Transverse colon (tissue), 4 donors: ENCODE measurements at regions of chr6 and their contacts with region 1.

Region 1: GRCh38 chr6:139375232-139376016 is 976 bp upstream of the CITED2 start:
- DNase-seq: peak; percentile 95
- H3K4me3 ChIP-seq: peak overlapping the region; percentile 80 to 87 (median 86)
- H3K27ac ChIP-seq: peak overlapping the region; percentile 92 to 99 (median 96)
- H3K4me1 ChIP-seq: peaks cover 0 to 28% (median 22%) of the 10 kb centered on the region in 4 donors
- H3K27me3 ChIP-seq: no peaks in the 10 kb centered on the region
- CTCF ChIP-seq: peak in 1 of 5 experiments; percentile 4
- EP300 ChIP-seq: peak; percentile 43
- POLR2A ChIP-seq: peak; percentile 76

Region 2: GRCh38 chr6:139230391-139230840 is 145.0 kb before region 1 on chr6:
- in situ Hi-C with region 1: loop called in 1 of 4 experiments (anchors 25 kb)
- intact Hi-C with region 1: no loop called
- DNase-seq: no peak
- H3K4me3 ChIP-seq: no peak overlapping the region
- H3K27ac ChIP-seq: no peak overlapping the region
- H3K4me1 ChIP-seq: no peaks in the 10 kb centered on the region
- H3K27me3 ChIP-seq: no peaks in the 10 kb centered on the region
- CTCF ChIP-seq: no peak
- EP300 ChIP-seq: no peak
- POLR2A ChIP-seq: no peak

Region 3: GRCh38 chr6:139539852-139540251 is 164.4 kb after region 1 on chr6:
- in situ Hi-C with region 1: loop called in 1 of 4 experiments (anchors 10 kb)
- intact Hi-C with region 1: no loop called
- DNase-seq: peak; percentile 42
- H3K4me3 ChIP-seq: peak overlapping the region in 1 of 4 donors; percentile 2
- H3K27ac ChIP-seq: peak overlapping the region; percentile 57 to 69 (median 62)
- H3K4me1 ChIP-seq: peaks cover 8 to 50% (median 23%) of the 10 kb centered on the region in 4 donors
- H3K27me3 ChIP-seq: no peaks in the 10 kb centered on the region
- CTCF ChIP-seq: no peak
- EP300 ChIP-seq: no peak
- POLR2A ChIP-seq: no peak

Region 4: DNA sequence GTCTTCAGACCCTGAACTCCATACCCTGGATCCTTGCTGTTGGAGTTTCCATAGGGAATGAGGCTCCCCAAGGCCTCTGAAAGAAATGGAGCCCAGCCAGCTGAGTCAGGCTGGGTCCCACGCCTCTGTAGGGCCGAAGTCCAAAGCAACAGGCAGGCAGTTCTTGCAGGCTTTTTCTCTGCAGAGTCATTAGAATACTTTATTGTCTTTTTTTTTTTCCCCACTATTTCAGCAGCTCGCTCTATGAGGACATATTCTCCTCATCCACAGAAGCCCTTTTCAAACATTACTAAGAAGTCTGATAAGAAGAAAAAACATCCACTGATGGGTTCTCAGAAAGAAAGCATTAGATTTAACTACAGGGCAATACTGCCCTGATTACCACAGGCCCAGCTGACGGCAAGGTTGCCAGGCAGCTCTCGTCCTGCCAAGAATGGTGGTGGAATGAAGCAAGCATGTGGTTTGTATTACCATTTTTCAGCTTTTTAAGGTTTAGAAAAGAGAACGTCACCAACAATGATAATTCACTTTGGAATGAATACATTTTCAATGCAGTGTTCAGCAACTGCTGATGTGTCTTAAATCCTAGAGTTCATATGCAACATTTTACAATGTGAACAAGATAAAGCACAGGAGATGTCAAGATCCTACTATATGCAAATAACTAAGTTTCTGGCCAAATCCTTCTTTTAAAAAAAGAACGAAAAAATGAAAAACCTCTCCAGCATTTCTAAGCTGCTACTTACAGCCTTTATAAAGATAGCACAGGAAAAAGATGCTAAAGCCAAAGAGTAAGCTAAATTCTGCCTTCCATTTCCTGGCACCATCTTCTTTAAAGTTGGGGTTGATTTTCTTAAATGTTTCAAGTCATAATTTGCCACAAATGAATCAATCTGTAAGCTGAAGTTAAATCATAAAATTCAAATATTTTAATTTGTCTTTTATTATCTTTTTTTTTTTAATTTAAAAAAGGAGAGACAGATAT is 222.6 kb after region 1 on chr6:
- in situ Hi-C with region 1: loop called in 3 of 4 experiments (anchors 5 to 25 kb)
- intact Hi-C with region 1: loop called (anchors 2 kb)
- DNase-seq: peak; percentile 86
- H3K4me3 ChIP-seq: no peak overlapping the region
- H3K27ac ChIP-seq: peak overlapping the region; percentile 81 to 88 (median 84)
- H3K4me1 ChIP-seq: peaks cover 10 to 53% (median 39%) of the 10 kb centered on the region in 4 donors
- H3K27me3 ChIP-seq: no peaks in the 10 kb centered on the region
- CTCF ChIP-seq: no peak
- EP300 ChIP-seq: no peak
- POLR2A ChIP-seq: peak; percentile 12

Region 5: GRCh38 chr6:139764498-139764986 is 389.1 kb after region 1 on chr6:
- in situ Hi-C with region 1: loop called in 1 of 4 experiments (anchors 10 kb)
- intact Hi-C with region 1: no loop called
- DNase-seq: no peak
- H3K4me3 ChIP-seq: no peak overlapping the region
- H3K27ac ChIP-seq: peak overlapping the region; percentile 74 to 80 (median 76)
- H3K4me1 ChIP-seq: peaks cover 6 to 22% (median 14%) of the 10 kb centered on the region in 4 donors
- H3K27me3 ChIP-seq: no peaks in the 10 kb centered on the region
- CTCF ChIP-seq: no peak
- EP300 ChIP-seq: no peak
- POLR2A ChIP-seq: no peak

Region 6: GRCh38 chr6:139852488-139853140 is 477.2 kb after region 1 on chr6:
- in situ Hi-C with region 1: loop called in 1 of 4 experiments (anchors 25 kb)
- intact Hi-C with region 1: loop called (anchors 10 kb)
- DNase-seq: peak; percentile 19
- H3K4me3 ChIP-seq: peak overlapping the region in 1 of 4 donors; percentile 28
- H3K27ac ChIP-seq: peak overlapping the region; percentile 72 to 87 (median 82)
- H3K4me1 ChIP-seq: peaks cover 18 to 53% (median 32%) of the 10 kb centered on the region in 4 donors
- H3K27me3 ChIP-seq: no peaks in the 10 kb centered on the region
- CTCF ChIP-seq: no peak
- EP300 ChIP-seq: no peak
- POLR2A ChIP-seq: peak; percentile 56

Region 7: GRCh38 chr6:140203661-140204147 is 828.3 kb after region 1 on chr6:
- in situ Hi-C with region 1: no loop called
- intact Hi-C with region 1: no loop called
- DNase-seq: no peak
- H3K4me3 ChIP-seq: no peak overlapping the region
- H3K27ac ChIP-seq: peak overlapping the region in 1 of 4 donors; percentile 14
- H3K4me1 ChIP-seq: peaks cover 0 to 9% (median 0%) of the 10 kb centered on the region in 4 donors
- H3K27me3 ChIP-seq: no peaks in the 10 kb centered on the region
- CTCF ChIP-seq: no peak
- EP300 ChIP-seq: no peak
- POLR2A ChIP-seq: no peak

Region 8: GRCh38 chr6:140441256-140441655 is 1065.8 kb after region 1 on chr6:
- in situ Hi-C with region 1: loop called in 1 of 4 experiments (anchors 25 kb)
- intact Hi-C with region 1: no loop called
- DNase-seq: peak; percentile 41
- H3K4me3 ChIP-seq: no peak overlapping the region
- H3K27ac ChIP-seq: no peak overlapping the region
- H3K4me1 ChIP-seq: peaks cover 0 to 7% (median 3%) of the 10 kb centered on the region in 4 donors
- H3K27me3 ChIP-seq: no peaks in the 10 kb centered on the region
- CTCF ChIP-seq: peak in 4 of 5 experiments; percentile 32 to 39 (median 35)
- EP300 ChIP-seq: no peak
- POLR2A ChIP-seq: no peak